ENCODE measurements at regions of chr6 and their contacts with region 1.

Region 1: GRCh38 chr6:31441365-31442267 is 38.2 kb downstream of the MICA start:
- DNase-seq: peak; percentile 45 to 87
- H3K4me3 ChIP-seq: no peak overlapping the region
- H3K4me1 ChIP-seq: no peaks in the 10 kb centered on the region
- H3K27me3 ChIP-seq: no peaks in the 10 kb centered on the region

Region 2: GRCh38 chr6:31403283-31403989 is 38.2 kb before region 1 on chr6 and contains the start of gene MICA:
- in situ Hi-C with region 1: loop called (anchors 5 kb)
- DNase-seq: peak; percentile 90 to 95
- H3K4me3 ChIP-seq: peak within 1 kb of the TSS; percentile 82
- H3K4me1 ChIP-seq: peaks cover 36% of the 10 kb centered on the region
- H3K27me3 ChIP-seq: no peaks in the 10 kb centered on the region

Measured in HAP-1 (cell line).